ENCODE measurements at regions of chr2 and their contacts with region 1.

Region 1: DNA sequence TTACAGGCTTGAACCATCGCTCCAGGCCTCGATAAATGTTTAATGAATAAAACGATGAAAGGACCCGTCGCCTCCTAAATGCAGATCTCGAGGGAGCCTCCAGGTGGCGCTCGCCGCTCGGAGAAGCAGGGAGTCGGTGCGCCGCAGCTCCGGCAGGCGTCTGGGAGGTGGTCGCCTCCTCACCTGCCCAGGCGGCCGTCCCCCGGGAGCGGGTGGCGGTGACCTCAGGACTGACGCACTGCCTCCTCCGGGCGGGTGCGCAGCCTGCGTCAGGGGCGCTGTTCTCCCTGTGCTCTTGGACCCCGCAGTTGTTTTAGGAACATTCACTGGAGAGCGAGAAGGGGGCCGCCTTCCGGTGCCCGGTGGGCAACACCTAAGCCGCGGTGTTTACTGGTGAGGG is 38.6 kb upstream of the POLE4 start:
- DNase-seq: peak; percentile 49 to 81 (median 61)
- ATAC-seq: peak in 3 of 4 donors; percentile 42 to 67 (median 63)
- H3K4me3 ChIP-seq: peak overlapping the region in 7 of 12 donors; percentile 5 to 36 (median 29)
- H3K27ac ChIP-seq: no peak overlapping the region
- H3K4me1 ChIP-seq: peaks cover 0 to 21% (median 1%) of the 10 kb centered on the region in 12 donors
- H3K27me3 ChIP-seq: peaks cover 0 to 24% (median 0%) of the 10 kb centered on the region in 9 donors
- CTCF ChIP-seq: peak; percentile 78 to 94 (median 86)
- POLR2A ChIP-seq: no peak

Region 2: DNA sequence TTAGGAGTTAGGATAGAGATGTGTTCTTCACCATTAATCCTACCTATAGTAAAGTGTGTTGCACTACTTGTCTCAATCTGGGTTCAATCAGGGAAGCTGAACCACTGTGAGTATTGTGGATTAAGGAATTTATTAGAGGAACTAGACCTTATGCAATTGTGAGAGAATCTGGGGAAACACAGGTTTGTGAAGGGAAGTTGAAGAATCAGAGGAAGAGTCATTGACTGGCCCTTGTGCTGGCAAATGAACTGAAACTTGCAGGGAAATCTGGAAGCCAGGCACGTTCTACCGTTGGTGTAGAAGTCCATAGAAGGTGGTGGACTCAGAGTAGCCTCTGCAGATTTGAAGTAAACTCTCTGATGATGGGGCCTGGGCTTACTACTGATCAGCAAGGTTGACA is 130.6 kb before region 1 on chr2:
- intact Hi-C with region 1: no loop called
- DNase-seq: no peak
- ATAC-seq: peak in 2 of 4 donors; percentile 44 to 48
- H3K4me3 ChIP-seq: no peak overlapping the region
- H3K27ac ChIP-seq: no peak overlapping the region
- H3K4me1 ChIP-seq: no peaks in the 10 kb centered on the region
- H3K27me3 ChIP-seq: no peaks in the 10 kb centered on the region
- CTCF ChIP-seq: no peak
- POLR2A ChIP-seq: no peak

Region 3: GRCh38 chr2:75047992-75048625 is 128.3 kb after region 1 on chr2:
- intact Hi-C with region 1: loop called in 2 of 10 experiments (anchors 10 kb)
- DNase-seq: no peak
- ATAC-seq: peak in 2 of 4 donors; percentile 65 to 73
- H3K4me3 ChIP-seq: no peak overlapping the region
- H3K27ac ChIP-seq: peak overlapping the region in 1 of 12 donors; percentile 42
- H3K4me1 ChIP-seq: peaks cover 0 to 15% (median 6%) of the 10 kb centered on the region in 12 donors
- H3K27me3 ChIP-seq: no peaks in the 10 kb centered on the region
- CTCF ChIP-seq: no peak
- POLR2A ChIP-seq: no peak

Region 4: DNA sequence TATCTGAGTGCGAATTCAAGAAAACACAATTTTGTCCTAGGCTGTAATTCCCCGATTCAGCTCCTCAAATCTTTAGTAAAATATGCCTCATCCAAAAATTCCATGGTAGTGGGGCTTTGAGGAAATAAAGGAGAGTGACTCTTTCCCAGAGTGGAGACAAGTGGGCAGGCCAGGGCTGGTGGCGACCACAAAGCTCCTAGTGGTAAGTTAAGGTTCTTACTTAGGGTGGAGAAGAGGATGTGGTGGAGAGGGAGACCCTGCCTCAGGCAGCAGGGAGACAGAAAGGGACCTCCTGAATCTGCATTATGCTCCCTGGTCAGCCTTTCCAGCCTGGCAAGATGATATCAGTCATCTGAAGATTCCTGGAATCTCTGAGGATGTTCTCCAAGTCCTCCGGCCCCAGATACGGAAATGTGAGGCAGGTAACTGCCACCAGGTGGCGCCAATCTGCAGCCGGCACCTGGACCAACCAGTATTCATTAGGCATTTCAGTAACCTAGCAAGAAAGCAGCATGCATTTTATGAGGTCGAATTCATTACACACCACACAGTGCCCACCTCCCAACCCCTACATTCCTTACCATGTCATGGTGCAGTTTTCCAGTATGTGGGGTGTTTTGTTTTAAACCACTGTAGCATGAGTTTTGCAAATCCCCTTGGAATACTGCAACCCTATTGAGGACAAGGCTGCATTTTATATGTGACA is 145.0 kb after region 1 on chr2:
- intact Hi-C with region 1: loop called in 2 of 10 experiments (anchors 2 to 5 kb)
- DNase-seq: peak in 3 of 5 donors; percentile 35 to 64 (median 37)
- ATAC-seq: no peak
- H3K4me3 ChIP-seq: no peak overlapping the region
- H3K27ac ChIP-seq: no peak overlapping the region
- H3K4me1 ChIP-seq: no peaks in the 10 kb centered on the region
- H3K27me3 ChIP-seq: no peaks in the 10 kb centered on the region
- CTCF ChIP-seq: peak; percentile 52 to 86 (median 70)
- POLR2A ChIP-seq: no peak

Region 5: GRCh38 chr2:75608684-75609333 is 689.0 kb after region 1 on chr2:
- intact Hi-C with region 1: loop called in 5 of 10 experiments (anchors 5 to 10 kb)
- DNase-seq: peak; percentile 37 to 69 (median 49)
- ATAC-seq: peak; percentile 74 to 91 (median 79)
- H3K4me3 ChIP-seq: peak overlapping the region in 7 of 12 donors; percentile 3 to 32 (median 19)
- H3K27ac ChIP-seq: no peak overlapping the region
- H3K4me1 ChIP-seq: peaks cover 0 to 5% (median 2%) of the 10 kb centered on the region in 12 donors
- H3K27me3 ChIP-seq: peaks cover 0 to 42% (median 18%) of the 10 kb centered on the region in 9 donors
- CTCF ChIP-seq: peak; percentile 83 to 97 (median 91)
- POLR2A ChIP-seq: no peak

Region 6: DNA sequence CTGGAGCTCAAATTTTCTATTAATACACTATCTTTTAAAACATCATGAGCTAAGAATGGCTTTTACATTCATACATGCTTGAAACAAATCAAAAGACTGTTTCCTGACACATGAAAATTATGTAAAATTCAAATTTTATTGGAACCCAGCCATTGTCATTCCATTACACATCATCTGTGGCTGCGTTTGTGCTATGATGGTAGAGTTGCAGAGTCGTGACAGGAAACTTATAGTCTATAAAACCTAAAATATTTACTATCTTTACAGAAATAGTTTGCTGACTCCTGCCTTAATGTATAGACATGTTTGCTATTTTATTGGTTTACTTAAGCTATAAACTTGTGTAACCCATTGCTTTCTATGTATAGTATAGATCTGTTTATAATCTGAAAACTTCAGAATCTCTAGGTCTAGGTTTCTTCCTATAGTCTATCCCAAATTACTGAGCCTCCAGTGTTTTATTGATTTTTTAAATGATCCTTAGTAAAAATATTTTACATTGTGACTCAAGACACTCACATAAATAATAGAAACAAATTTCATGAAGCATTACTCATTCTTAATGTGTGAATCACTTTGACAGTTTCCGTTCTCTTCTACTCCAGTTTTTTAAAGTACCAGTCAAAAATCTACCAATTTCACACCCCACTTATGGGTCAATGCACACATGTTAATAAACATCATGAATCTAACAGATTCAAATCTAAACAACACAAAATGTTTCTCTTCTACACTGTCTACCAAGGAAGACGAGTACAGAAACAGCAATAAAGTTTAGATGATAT is 700.3 kb after region 1 on chr2:
- intact Hi-C with region 1: loop called in 2 of 10 experiments (anchors 10 kb)
- DNase-seq: no peak
- ATAC-seq: no peak
- H3K4me3 ChIP-seq: no peak overlapping the region
- H3K27ac ChIP-seq: no peak overlapping the region
- H3K4me1 ChIP-seq: no peaks in the 10 kb centered on the region
- H3K27me3 ChIP-seq: peaks cover 0 to 5% (median 0%) of the 10 kb centered on the region in 9 donors
- CTCF ChIP-seq: no peak
- POLR2A ChIP-seq: no peak